Right lobe of liver (tissue), 6 donors: ENCODE measurements at regions of chr4 and their contacts with region 1.

Region 1: DNA sequence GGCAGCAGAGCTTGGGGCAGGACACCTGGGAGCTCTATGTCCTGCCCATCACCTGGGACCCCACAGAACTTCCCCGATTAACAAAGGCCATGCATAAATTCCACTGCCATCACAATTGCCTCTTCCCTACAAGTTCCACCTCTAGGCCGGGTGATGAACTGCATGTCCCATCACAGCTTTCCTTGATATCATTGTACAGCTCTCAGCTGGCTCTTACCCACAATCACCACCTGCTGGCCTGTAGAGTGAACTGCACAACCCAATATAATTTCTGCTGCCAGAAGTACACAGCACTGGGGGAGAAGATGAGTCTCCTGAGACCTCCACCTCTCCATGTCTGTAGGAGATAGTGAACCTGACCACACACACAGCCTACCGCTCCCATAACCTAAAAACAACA is 285.0 kb upstream of the AADAT start:
- DNase-seq: peak in 1 of 3 donors; percentile 63
- ATAC-seq: peak; percentile 99 to 100 (median 100)
- H3K4me3 ChIP-seq: no peak overlapping the region
- H3K27ac ChIP-seq: no peak overlapping the region
- H3K4me1 ChIP-seq: no peaks in the 10 kb centered on the region
- H3K27me3 ChIP-seq: no peaks in the 10 kb centered on the region
- CTCF ChIP-seq: peak; percentile 61 to 96 (median 76)
- POLR2A ChIP-seq: no peak

Region 2: GRCh38 chr4:170089668-170090351 is 285.0 kb before region 1 on chr4 and contains the start of gene AADAT:
- intact Hi-C with region 1: no loop called
- DNase-seq: peak; percentile 92 to 96 (median 95)
- ATAC-seq: peak; percentile 95 to 98 (median 98)
- H3K4me3 ChIP-seq: peak within 1 kb of the TSS; percentile 53 to 66 (median 62)
- H3K27ac ChIP-seq: peak within 1 kb of the TSS; percentile 38 to 74 (median 65)
- H3K4me1 ChIP-seq: peaks cover 0 to 18% (median 0%) of the 10 kb centered on the region in 4 donors
- H3K27me3 ChIP-seq: no peaks in the 10 kb centered on the region
- CTCF ChIP-seq: peak; percentile 77 to 92 (median 86)
- POLR2A ChIP-seq: peak; percentile 32
- total RNA-seq, gene AADAT: 5.6 to 43.3 (median 19.5) TPM

Region 3: DNA sequence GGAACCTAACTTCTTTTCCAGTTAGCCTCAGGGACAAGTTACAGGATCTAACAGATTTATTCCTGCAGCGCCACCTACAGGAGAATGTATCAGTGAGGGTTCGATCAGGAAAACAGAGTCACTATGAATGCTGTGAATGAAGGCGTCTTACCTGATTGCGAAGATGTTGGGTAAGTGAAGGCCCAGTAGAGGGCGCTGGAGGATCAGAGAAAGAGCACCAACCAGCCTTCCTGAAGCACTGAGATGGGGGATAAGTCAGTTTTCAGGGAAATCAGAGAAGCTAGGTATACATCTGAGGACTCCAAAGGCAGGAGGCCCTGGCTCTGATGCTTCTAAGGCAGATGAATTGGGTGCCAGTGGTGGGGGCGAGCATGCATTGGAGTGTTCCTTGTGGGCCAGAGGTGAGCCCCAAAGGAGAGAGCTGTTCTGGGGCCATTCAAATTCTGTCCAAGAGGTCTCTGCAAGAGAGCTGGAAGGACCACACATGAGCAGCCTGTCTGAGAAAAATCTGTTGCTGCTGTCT is 115.1 kb before region 1 on chr4:
- intact Hi-C with region 1: loop called in 1 of 2 experiments (anchors 5 kb)
- DNase-seq: peak; percentile 62 to 83 (median 66)
- ATAC-seq: peak; percentile 100
- H3K4me3 ChIP-seq: no peak overlapping the region
- H3K27ac ChIP-seq: no peak overlapping the region
- H3K4me1 ChIP-seq: no peaks in the 10 kb centered on the region
- H3K27me3 ChIP-seq: no peaks in the 10 kb centered on the region
- CTCF ChIP-seq: peak; percentile 83 to 97 (median 90)
- POLR2A ChIP-seq: no peak